Calu3 (cell line): ENCODE measurements at regions of chr10 and their contacts with region 1.

Region 1: DNA sequence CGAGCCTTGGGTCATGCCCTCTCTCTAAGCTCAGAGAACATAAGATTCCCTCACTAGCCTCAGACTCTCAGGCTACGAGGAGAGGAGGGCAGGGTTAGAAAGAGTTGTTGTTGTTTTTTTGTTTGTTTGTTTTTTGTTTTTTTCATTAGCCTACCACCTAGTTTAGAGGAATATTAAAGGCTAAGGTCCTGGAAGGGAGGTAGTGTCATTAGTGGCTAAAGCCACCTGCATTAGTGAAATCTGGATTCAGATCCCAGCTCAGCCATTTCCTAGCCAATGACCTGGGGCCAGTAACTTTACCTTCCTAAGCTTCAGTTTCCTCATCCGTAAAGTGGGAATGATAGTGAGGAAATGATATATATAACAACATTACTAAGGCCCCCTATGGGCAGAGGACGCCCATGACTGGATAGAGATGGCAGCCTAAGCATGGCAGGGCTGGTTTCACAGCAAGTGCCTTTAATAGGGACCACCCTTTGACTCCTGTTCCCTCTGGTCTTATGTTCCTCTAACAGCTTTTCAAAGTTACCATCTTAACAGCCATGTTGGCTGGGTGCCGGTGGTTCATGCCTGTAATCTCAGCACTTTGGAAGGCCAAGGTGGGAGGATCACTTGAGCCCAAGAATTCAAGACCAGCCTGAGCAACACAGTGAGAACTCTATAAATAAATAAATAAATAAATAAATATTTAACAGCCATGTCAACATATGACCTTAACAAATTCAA is 5.1 kb downstream of the DDIT4 start:
- DNase-seq: no peak
- H3K4me3 Mint-ChIP-seq: no peak overlapping the region
- H3K27ac Mint-ChIP-seq: peak overlapping the region; percentile 99
- H3K4me1 Mint-ChIP-seq: peaks cover 38% of the 10 kb centered on the region
- H3K27me3 Mint-ChIP-seq: no peaks in the 10 kb centered on the region
- CTCF ChIP-seq: no peak

Region 2: DNA sequence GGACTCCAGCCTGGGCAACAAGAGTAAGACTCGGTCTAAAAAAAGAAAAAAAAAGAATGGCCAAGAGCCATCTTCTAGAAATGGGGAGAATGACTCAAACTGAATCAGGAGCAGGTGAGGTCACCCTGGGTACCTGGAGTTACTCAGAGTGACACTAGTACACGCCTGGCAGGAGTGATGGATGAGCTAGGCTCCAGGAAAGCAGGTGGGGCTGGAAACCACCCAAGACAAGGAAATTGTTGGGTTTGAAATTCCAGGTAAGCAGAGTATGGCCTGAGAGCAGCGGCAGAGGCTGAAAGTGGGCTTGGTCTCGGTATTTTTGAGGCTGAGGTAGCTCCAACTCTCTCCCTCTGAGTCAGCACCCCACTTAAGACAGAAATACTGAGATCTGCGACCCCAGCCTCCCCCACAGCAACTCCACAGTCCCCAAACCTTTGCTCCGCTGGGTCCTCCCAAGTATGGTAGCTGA is 13.4 kb after region 1 on chr10:
- CTCF ChIA-PET with region 1: interaction called, 12 read pairs
- intact Hi-C with region 1: no loop called
- DNase-seq: peak; percentile 90
- H3K4me3 Mint-ChIP-seq: peak overlapping the region; percentile 1
- H3K27ac Mint-ChIP-seq: peak overlapping the region; percentile 74
- H3K4me1 Mint-ChIP-seq: peaks cover 42% of the 10 kb centered on the region
- H3K27me3 Mint-ChIP-seq: no peaks in the 10 kb centered on the region
- CTCF ChIP-seq: no peak